CD8-positive, alpha-beta T cell (primary cell): ENCODE measurements at regions of chr19 and their contacts with region 1.

Region 1: DNA sequence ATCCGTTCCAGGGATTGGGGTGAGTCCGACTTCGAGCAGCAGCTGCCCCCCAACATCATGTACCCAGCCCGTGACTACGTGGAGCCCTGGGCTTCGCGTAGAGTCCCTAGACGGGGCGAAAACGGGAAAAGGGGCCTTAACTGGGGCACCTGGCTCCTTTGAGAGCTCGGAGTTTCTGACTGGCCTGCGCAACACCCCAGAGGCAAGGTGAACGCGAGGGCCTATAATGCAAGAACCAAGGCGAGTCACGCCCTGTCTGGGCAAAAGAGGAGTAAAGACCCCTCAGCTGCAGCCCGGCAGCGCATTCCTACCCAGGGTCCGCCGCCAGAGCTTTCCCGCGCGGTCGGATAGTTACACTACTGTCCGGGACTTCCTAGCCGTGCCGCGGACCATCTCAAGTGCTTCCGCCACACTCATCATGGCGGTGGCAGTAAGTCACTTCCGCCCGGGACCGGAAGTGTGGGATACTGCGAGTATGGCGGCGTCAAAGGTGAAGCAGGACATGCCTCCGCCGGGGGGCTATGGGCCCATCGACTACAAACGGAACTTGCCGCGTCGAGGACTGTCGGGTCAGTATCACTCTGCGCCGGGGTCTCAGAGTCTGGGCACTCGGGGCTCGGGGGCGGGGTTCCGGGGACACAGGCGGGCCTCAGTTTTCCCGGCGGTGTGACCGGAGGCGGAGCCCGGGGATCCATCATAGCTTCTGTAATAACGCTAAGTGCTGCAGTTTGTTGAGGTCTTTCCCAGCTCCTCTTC is at the start of gene NDUFA13:
- DNase-seq: peak; percentile 87 to 99 (median 94)
- ATAC-seq: peak; percentile 89
- H3K4me3 ChIP-seq: peak within 1 kb of the TSS; percentile 94 to 99
- H3K4me3 Mint-ChIP-seq: peak within 1 kb of the TSS; percentile 97
- H3K27ac ChIP-seq: peak within 1 kb of the TSS; percentile 80 to 87
- H3K27ac Mint-ChIP-seq: peak within 1 kb of the TSS; percentile 96
- H3K4me1 ChIP-seq: peaks cover 23% of the 10 kb centered on the region
- H3K4me1 Mint-ChIP-seq: peaks cover 30% of the 10 kb centered on the region
- H3K27me3 ChIP-seq: no peaks in the 10 kb centered on the region
- H3K27me3 Mint-ChIP-seq: no peaks in the 10 kb centered on the region
- CTCF ChIP-seq: no peak
- total RNA-seq, gene NDUFA13: 151 to 166 TPM

Region 2: GRCh38 chr19:19320362-19321142 is 195.4 kb before region 1 on chr19 and contains the starts of genes MAU2 and SUGP1:
- CTCF ChIA-PET with region 1: no interaction called
- POLR2A ChIA-PET with region 1: no interaction called
- intact Hi-C with region 1: loop called in 1 of 2 experiments (anchors 1 kb)
- DNase-seq: peak; percentile 81 to 95 (median 88)
- ATAC-seq: peak; percentile 90
- H3K4me3 ChIP-seq: peak within 1 kb of the TSS; percentile 88 to 94
- H3K4me3 Mint-ChIP-seq: peak within 1 kb of the TSS; percentile 99
- H3K27ac ChIP-seq: peak within 1 kb of the TSS; percentile 88 to 97
- H3K27ac Mint-ChIP-seq: peak within 1 kb of the TSS; percentile 99
- H3K4me1 ChIP-seq: peaks cover 35% of the 10 kb centered on the region
- H3K4me1 Mint-ChIP-seq: peaks cover 40% of the 10 kb centered on the region
- H3K27me3 ChIP-seq: no peaks in the 10 kb centered on the region
- H3K27me3 Mint-ChIP-seq: no peaks in the 10 kb centered on the region
- CTCF ChIP-seq: no peak
- total RNA-seq, gene MAU2: 137 to 139 TPM
- total RNA-seq, gene SUGP1: 60.9 to 68.2 TPM

Region 3: DNA sequence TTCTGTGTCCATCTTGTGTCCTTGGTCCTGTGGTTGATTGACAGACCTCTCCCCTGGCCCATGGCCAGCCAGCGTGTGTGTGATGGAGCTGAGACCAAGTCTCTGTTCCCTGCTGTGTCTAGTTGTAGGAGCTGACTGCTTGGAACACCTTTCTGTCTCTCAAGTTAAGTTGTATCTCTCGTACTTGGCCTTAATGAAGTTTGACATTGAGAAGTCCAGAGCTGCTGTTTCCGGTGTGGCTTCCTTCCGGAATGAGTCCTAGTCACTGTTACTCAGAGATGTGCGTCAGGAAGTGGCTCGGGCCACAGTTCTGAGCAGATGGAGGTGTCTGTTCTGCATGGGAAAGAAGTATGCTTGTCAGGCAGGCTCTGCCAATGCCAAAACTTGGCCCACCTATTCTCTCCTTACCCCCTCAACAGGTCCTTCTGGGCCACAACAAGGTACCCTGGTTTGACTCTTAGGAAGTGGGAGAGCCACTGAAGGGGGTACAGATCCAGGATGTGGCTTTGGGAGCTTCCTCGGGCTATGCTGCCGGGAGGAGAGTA is 56.2 kb before region 1 on chr19:
- CTCF ChIA-PET with region 1: no interaction called
- POLR2A ChIA-PET with region 1: interaction called, 3 read pairs
- intact Hi-C with region 1: loop called in 1 of 2 experiments (anchors 2 kb)
- DNase-seq: peak in 8 of 9 experiments; percentile 54 to 90 (median 74)
- ATAC-seq: peak; percentile 63
- H3K4me3 ChIP-seq: peak overlapping the region; percentile 44 to 47
- H3K4me3 Mint-ChIP-seq: peak overlapping the region; percentile 85
- H3K27ac ChIP-seq: peak overlapping the region; percentile 67 to 96
- H3K27ac Mint-ChIP-seq: peak overlapping the region; percentile 98
- H3K4me1 ChIP-seq: peaks cover 83% of the 10 kb centered on the region
- H3K4me1 Mint-ChIP-seq: peaks cover 86% of the 10 kb centered on the region
- H3K27me3 ChIP-seq: no peaks in the 10 kb centered on the region
- H3K27me3 Mint-ChIP-seq: no peaks in the 10 kb centered on the region
- CTCF ChIP-seq: no peak

Region 4: DNA sequence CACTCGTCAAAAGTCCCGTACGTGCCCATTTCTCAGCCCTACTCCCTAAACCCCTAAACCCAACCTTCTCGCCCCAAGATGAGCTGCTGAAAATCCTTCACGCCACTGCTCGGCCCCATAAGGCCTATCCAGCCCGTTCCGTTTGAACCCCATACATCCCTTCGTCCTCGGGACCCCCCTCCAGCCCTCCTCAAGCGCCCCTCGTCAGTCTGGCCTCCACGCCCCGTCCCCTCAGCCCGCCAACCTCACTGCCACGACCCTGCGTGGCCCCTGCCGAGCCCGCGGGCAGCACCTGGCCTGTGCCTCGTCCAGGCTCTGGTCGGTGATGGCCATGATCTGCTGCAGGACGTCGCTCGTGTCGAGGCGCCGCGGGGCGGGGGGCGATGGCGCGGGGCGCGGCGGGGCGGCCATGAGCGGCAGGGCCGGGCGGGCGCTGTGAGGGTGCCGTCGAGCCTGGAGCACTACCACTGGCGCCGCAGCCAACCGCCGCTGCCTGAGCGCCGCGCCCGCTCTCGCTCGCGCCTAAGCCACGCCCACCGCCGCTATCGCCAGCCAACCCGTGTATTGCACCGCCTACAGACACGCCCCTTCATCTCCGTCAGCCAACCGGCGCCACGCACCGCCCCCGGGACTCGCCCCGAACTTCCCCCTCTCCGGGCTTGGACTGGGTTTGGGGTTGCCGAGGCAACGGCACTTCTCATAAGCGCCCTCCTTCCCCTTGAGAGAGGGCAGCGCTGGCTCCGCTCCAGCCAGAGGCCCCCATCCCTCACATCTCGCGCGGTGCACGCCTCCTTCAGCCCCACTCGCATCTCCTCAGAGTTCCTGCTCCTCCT is 102.5 kb after region 1 on chr19 and contains the start of gene PBX4:
- CTCF ChIA-PET with region 1: interaction called, 3 read pairs
- POLR2A ChIA-PET with region 1: no interaction called
- intact Hi-C with region 1: loop called in 1 of 2 experiments (anchors 1 kb)
- DNase-seq: peak; percentile 98 to 100 (median 99)
- ATAC-seq: peak; percentile 96
- H3K4me3 ChIP-seq: peak within 1 kb of the TSS; percentile 70 to 91
- H3K4me3 Mint-ChIP-seq: peak within 1 kb of the TSS; percentile 90
- H3K27ac ChIP-seq: peak within 1 kb of the TSS; percentile 74 to 75
- H3K27ac Mint-ChIP-seq: peak within 1 kb of the TSS; percentile 92
- H3K4me1 ChIP-seq: peaks cover 28% of the 10 kb centered on the region
- H3K4me1 Mint-ChIP-seq: peaks cover 42% of the 10 kb centered on the region
- H3K27me3 ChIP-seq: no peaks in the 10 kb centered on the region
- H3K27me3 Mint-ChIP-seq: no peaks in the 10 kb centered on the region
- CTCF ChIP-seq: no peak
- total RNA-seq, gene PBX4: 44.4 to 48.8 TPM

Region 5: DNA sequence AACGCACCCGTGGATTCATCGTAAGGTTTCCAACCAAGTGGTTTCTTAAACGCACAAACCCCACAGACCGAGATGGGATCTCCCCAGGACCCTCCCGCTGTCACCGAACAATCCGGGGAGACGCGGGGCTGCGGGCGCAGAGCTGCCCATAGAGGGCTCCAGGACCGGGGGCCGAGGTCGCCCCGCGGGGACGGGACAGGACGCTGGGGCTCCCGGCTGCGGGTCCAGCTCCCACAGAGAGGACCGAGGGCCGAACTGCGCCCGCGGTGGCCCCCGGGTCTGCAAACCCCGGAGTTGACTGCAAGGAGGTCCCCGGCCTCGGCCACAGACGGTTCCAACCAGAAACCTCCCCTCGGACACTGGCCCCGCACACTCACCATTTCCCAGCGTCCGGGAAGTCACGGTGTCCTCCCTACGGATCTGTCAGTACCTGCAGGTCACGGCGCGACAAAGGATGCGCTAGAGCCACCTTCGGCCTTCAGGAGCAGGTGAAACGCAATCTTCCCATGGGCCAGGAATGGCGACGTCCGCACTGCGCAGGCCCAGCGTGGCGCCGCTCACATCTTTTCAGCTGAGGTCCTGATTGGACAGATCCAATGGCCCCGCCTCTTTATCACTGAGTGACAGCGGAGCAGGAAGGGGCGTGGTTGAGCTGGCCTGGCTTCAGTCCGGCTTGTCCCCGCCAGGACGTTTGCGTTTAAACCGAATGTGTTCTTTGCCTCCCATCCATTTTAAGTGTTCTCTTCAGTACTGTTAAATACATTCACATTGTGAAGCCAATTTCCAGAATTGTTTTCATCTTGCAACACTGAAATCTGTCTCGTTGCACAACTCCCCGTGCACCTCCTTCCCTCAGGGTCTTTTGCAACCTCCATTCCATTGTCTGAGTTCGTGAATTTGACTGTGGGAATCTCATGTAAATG is 216.9 kb after region 1 on chr19 and contains the start of gene ZNF14:
- CTCF ChIA-PET with region 1: no interaction called
- POLR2A ChIA-PET with region 1: interaction called, 3 read pairs
- intact Hi-C with region 1: loop called in 1 of 2 experiments (anchors 1 kb)
- DNase-seq: peak; percentile 77 to 96 (median 92)
- ATAC-seq: peak; percentile 99
- H3K4me3 ChIP-seq: peak within 1 kb of the TSS; percentile 84 to 99
- H3K4me3 Mint-ChIP-seq: peak within 1 kb of the TSS; percentile 100
- H3K27ac ChIP-seq: peak within 1 kb of the TSS; percentile 79 to 82
- H3K27ac Mint-ChIP-seq: peak within 1 kb of the TSS; percentile 93
- H3K4me1 ChIP-seq: peaks cover 13% of the 10 kb centered on the region
- H3K4me1 Mint-ChIP-seq: peaks cover 29% of the 10 kb centered on the region
- H3K27me3 ChIP-seq: no peaks in the 10 kb centered on the region
- H3K27me3 Mint-ChIP-seq: no peaks in the 10 kb centered on the region
- CTCF ChIP-seq: no peak
- total RNA-seq, gene ZNF14: 40.7 to 44.9 TPM

Region 6: GRCh38 chr19:19865739-19866481 is 350.0 kb after region 1 on chr19 and contains the start of gene ZNF253:
- CTCF ChIA-PET with region 1: no interaction called
- POLR2A ChIA-PET with region 1: no interaction called
- intact Hi-C with region 1: loop called (anchors 5 kb)
- DNase-seq: peak; percentile 88 to 97 (median 95)
- ATAC-seq: peak; percentile 93
- H3K4me3 ChIP-seq: peak within 1 kb of the TSS; percentile 89 to 99
- H3K4me3 Mint-ChIP-seq: peak within 1 kb of the TSS; percentile 100
- H3K27ac ChIP-seq: peak within 1 kb of the TSS; percentile 89 to 91
- H3K27ac Mint-ChIP-seq: peak within 1 kb of the TSS; percentile 98
- H3K4me1 ChIP-seq: peaks cover 22% of the 10 kb centered on the region
- H3K4me1 Mint-ChIP-seq: peaks cover 39% of the 10 kb centered on the region
- H3K27me3 ChIP-seq: no peaks in the 10 kb centered on the region
- H3K27me3 Mint-ChIP-seq: no peaks in the 10 kb centered on the region
- CTCF ChIP-seq: no peak
- total RNA-seq, gene ZNF253: 2.6 to 3.2 TPM